Colonic mucosa (tissue), 4 donors: ENCODE measurements at regions of chr3 and their contacts with region 1.

Region 1: GRCh38 chr3:118884748-118885206 is 149.9 kb downstream of the IGSF11 start:
- DNase-seq: peak; percentile 71
- H3K4me3 ChIP-seq: no peak overlapping the region
- H3K27ac ChIP-seq: no peak overlapping the region
- H3K4me1 ChIP-seq: no peaks in the 10 kb centered on the region
- H3K27me3 ChIP-seq: no peaks in the 10 kb centered on the region
- CTCF ChIP-seq: peak; percentile 74

Region 2: DNA sequence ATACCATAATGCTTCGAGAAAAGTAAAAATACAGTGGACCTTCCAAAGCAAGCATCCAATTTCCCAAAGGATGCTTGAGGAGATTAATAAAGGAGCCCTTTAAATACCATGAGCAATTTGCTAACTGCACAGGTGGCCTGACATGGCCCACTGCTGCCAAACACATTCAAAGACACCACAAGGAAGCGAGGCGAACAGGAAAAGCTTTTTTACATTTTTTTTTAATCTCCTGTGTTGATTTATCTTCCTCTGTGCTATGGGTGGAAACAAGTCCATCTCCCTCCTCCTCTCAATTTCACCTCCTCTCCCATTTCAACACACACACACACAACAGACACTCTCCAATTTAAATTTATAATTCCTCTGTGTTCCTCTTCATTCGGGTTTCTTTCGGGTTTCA is 93.5 kb before region 1 on chr3:
- intact Hi-C with region 1: no loop called
- DNase-seq: no peak
- H3K4me3 ChIP-seq: no peak overlapping the region
- H3K27ac ChIP-seq: no peak overlapping the region
- H3K4me1 ChIP-seq: no peaks in the 10 kb centered on the region
- H3K27me3 ChIP-seq: no peaks in the 10 kb centered on the region
- CTCF ChIP-seq: no peak

Region 3: DNA sequence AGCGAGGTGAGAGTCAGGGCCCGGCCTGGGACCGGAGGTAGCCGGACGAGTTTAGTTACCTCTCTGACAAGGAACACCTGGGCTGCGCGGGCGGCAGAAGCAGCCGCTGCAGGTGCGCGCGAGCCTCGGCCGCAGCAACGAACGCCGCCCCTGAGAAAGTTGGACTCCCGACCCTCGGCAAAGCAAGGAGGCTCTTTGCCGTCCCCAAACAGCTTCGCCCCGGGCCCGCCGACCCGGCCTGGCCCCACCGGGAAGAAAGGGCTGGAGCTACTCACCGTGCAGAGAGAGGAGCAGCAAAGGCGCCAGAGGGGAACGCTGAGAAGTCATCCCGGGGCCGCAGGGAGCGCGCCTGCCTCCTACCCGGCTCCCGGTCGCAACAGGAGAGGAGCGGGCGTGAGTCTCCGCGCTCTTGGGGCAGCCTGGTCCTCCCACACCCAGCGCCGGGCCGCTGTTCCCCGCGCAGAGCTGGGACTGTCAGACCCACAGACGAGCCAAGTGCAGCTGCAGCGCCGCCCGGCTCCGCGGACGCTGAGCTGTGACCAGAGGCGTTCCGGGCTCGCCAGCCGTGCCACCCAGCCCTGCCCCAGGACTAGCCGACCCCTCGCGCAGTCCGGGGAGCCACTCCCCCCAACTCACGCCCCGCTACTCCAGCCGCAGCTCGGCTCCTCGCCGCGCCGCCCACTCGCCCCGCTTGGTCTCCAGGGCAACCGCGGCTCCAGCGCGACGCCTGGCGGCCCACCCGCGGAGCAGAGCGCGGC is 149.7 kb after region 1 on chr3 and contains the start of gene IGSF11:
- intact Hi-C with region 1: loop called (anchors 10 kb)
- DNase-seq: peak; percentile 41
- H3K4me3 ChIP-seq: peak within 1 kb of the TSS; percentile 55
- H3K27ac ChIP-seq: no peak within 1 kb of the TSS
- H3K4me1 ChIP-seq: no peaks in the 10 kb centered on the region
- H3K27me3 ChIP-seq: peaks cover 11% of the 10 kb centered on the region
- CTCF ChIP-seq: no peak
- total RNA-seq, gene IGSF11: 0.22 to 0.50 TPM

Region 4: DNA sequence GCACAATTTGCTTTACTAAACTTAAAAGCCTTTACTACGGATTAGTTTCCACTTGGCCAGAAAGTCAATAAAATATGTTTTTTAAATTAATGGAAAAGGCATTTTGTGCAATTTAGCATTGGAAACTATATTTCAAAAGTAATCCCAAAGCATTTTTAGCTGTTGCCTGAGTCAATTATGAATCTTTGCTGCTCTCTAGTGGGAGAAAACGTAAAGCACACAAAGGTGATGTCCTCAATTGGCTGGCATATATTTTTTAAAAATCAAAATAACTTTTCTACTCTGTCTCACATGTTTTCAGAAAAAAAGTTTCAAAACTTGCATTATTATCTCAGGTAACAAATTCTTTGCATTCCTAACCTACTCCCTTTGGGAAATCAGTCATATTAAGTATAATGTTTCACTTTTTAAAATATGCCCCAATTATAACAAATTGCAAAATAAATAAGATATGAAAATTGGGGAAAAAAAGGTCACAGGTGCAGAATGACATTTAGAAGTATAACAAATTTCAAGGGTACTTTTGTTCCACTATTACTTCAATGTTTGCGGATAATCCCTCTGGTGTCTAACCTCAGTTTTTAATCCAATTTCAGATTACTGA is 213.9 kb after region 1 on chr3:
- intact Hi-C with region 1: loop called (anchors 2 kb)
- DNase-seq: no peak
- H3K4me3 ChIP-seq: no peak overlapping the region
- H3K27ac ChIP-seq: no peak overlapping the region
- H3K4me1 ChIP-seq: no peaks in the 10 kb centered on the region
- H3K27me3 ChIP-seq: no peaks in the 10 kb centered on the region
- CTCF ChIP-seq: peak; percentile 61

Region 5: DNA sequence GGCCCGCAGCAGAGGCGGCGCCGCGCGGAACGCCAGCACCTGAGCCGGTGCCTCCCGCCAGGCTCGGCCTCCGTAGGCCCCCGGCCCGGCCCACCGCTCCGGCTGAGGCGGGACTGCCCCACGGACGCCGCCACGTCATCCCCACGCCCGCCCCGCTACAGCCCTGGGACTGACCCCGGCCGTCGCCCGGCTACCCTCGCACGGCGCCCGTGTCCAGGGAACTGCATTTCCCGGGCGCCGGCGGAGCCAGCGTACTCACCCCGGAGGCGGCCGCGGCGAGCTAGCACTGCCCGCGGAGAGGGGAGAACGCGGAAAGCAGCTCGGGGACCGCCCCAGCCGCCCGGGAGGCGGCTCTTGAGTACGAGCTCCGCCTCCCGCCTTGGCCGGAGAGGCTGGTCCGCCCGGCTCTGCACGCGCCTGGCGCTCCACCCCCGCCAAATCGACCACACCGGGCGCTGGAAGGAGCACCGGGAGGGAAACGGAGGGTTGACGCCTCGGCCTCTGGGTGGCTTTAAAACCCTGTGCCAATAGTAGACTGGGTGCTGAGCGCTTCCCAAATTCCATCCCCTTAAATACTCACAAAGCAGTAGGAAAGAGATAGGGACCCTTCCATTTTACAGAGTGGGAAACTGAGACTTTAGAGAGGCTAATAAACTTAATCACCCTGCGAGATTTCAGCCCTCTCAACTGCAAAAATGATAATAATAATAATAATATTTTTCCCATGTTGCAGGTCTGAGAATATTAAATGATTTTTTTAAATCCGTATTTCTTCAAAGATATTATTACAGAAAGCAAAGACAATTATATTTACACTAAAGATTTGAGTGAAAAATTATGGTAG is 356.0 kb after region 1 on chr3 and contains the start of gene B4GALT4:
- intact Hi-C with region 1: loop called (anchors 10 kb)
- DNase-seq: peak; percentile 91
- H3K4me3 ChIP-seq: peak within 1 kb of the TSS; percentile 58
- H3K27ac ChIP-seq: peak within 1 kb of the TSS; percentile 84
- H3K4me1 ChIP-seq: no peaks in the 10 kb centered on the region
- H3K27me3 ChIP-seq: no peaks in the 10 kb centered on the region
- CTCF ChIP-seq: no peak
- total RNA-seq, gene B4GALT4: 43.1 to 54.5 TPM